ENCODE measurements at regions of chr6 and their contacts with region 1.

Region 1: DNA sequence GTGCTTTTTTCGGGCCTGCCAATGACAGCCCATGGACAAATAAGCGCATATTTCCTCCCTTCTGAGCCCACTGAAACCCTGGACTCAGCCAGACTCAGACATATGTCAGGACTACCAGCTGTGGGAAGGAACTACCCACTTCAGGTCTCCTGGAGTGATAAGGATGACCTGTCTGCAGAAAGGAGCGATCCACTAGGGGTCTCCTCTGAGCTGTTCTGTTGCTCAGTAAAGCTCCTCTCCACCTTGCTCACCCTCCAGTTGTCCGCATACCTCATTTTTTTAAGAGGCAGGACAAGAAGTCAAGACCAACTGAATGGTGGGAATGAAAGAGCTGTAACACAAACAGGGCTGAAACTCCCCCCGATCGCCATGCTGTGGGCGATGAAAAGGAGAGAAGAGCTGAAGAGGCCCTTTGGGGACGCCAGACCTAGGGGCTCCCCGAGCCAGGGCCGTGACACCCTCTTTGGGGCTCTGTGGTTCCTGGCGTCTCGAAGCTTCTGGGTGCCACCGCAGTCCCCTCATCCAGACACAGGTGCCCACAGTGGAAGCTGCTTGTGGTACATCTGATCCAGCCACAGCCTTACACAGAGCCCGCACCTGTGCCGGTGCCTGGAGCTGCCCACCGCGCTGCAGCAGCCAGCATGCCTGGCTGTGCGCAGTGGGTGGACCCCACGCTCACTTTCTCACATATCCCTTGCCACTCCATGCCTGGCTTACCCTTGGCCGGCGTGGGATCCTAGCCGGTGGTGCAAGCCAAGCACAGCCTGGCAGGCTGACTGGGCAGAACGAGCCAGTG is 68.8 kb downstream of the EYS start:
- DNase-seq: peak; percentile 45
- ATAC-seq: peak; percentile 100
- H3K4me3 ChIP-seq: no peak overlapping the region
- H3K27ac ChIP-seq: no peak overlapping the region
- H3K4me1 ChIP-seq: no peaks in the 10 kb centered on the region
- H3K27me3 ChIP-seq: no peaks in the 10 kb centered on the region
- CTCF ChIP-seq: peak; percentile 74
- EP300 ChIP-seq: no peak
- POLR2A ChIP-seq: no peak
- RAD21 ChIP-seq: no peak

Region 2: GRCh38 chr6:65776313-65776712 is 138.1 kb after region 1 on chr6:
- CTCF ChIA-PET with region 1: no interaction called
- POLR2A ChIA-PET with region 1: no interaction called
- in situ Hi-C with region 1: no loop called
- intact Hi-C with region 1: loop called (anchors 1 kb)
- DNase-seq: no peak
- ATAC-seq: peak; percentile 30; the same call in 1 of the 3 replicates
- H3K4me3 ChIP-seq: no peak overlapping the region
- H3K27ac ChIP-seq: no peak overlapping the region
- H3K4me1 ChIP-seq: no peaks in the 10 kb centered on the region
- H3K27me3 ChIP-seq: no peaks in the 10 kb centered on the region
- CTCF ChIP-seq: 0 out of 2 replicates have a peak, but pooled peaks have one; percentile 23
- EP300 ChIP-seq: no peak
- POLR2A ChIP-seq: no peak
- RAD21 ChIP-seq: no peak

Region 3: GRCh38 chr6:65943051-65943450 is 304.8 kb after region 1 on chr6:
- CTCF ChIA-PET with region 1: no interaction called
- POLR2A ChIA-PET with region 1: no interaction called
- in situ Hi-C with region 1: no loop called
- intact Hi-C with region 1: no loop called
- DNase-seq: no peak
- ATAC-seq: no peak
- H3K4me3 ChIP-seq: no peak overlapping the region
- H3K27ac ChIP-seq: no peak overlapping the region
- H3K4me1 ChIP-seq: no peaks in the 10 kb centered on the region
- H3K27me3 ChIP-seq: no peaks in the 10 kb centered on the region
- CTCF ChIP-seq: no peak
- EP300 ChIP-seq: no peak
- POLR2A ChIP-seq: no peak
- RAD21 ChIP-seq: no peak

Region 4: DNA sequence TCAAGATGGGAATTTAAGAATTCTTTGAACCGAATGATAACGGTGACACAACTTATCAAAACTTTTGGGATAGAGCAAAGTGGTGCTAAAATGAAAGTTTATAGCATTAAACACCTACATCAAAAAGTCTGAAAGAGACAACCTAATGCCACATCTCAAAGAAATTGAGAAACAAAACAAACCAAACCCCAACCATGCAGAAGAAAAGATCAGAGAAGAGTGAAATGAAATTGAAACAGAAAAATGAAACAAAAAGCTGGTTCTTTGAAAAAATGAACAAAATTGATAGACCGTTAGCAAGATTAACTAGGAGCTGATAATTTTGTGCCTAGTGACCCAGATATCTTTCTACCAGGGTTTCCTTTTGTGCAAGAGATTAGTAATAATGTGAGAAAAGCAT is 316.8 kb after region 1 on chr6:
- CTCF ChIA-PET with region 1: no interaction called
- POLR2A ChIA-PET with region 1: no interaction called
- in situ Hi-C with region 1: no loop called
- intact Hi-C with region 1: no loop called
- DNase-seq: no peak
- ATAC-seq: no peak
- H3K4me3 ChIP-seq: no peak overlapping the region
- H3K27ac ChIP-seq: no peak overlapping the region
- H3K4me1 ChIP-seq: no peaks in the 10 kb centered on the region
- H3K27me3 ChIP-seq: no peaks in the 10 kb centered on the region
- CTCF ChIP-seq: no peak
- EP300 ChIP-seq: no peak
- POLR2A ChIP-seq: no peak
- RAD21 ChIP-seq: no peak

Region 5: GRCh38 chr6:66264376-66264775 is 626.1 kb after region 1 on chr6:
- CTCF ChIA-PET with region 1: no interaction called
- POLR2A ChIA-PET with region 1: no interaction called
- in situ Hi-C with region 1: loop called (anchors 25 kb)
- intact Hi-C with region 1: no loop called
- DNase-seq: no peak
- ATAC-seq: no peak
- H3K4me3 ChIP-seq: no peak overlapping the region
- H3K27ac ChIP-seq: no peak overlapping the region
- H3K4me1 ChIP-seq: no peaks in the 10 kb centered on the region
- H3K27me3 ChIP-seq: no peaks in the 10 kb centered on the region
- CTCF ChIP-seq: no peak
- EP300 ChIP-seq: no peak
- POLR2A ChIP-seq: no peak
- RAD21 ChIP-seq: no peak

Region 6: DNA sequence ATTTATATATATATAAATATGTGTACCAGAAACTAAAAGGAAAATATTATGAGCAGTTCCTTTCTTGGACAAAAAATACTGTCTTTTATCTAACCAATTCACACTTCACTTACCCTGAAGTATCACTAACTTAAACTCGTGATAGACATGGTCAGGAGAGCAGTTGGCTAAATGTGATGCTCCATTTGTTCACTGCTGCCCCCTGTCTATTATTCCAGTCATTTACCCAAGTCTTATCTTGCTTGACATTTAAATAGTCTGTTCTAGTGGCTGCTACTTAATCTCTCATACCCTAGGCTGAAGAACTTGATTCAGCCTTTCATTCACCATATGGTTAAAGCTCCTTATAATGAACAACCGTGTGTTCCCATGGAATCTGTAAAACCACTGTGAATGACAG is 858.4 kb after region 1 on chr6:
- CTCF ChIA-PET with region 1: no interaction called
- POLR2A ChIA-PET with region 1: no interaction called
- in situ Hi-C with region 1: loop called (anchors 25 kb)
- intact Hi-C with region 1: no loop called
- DNase-seq: peak; percentile 50
- ATAC-seq: peak; percentile 95
- H3K4me3 ChIP-seq: no peak overlapping the region
- H3K27ac ChIP-seq: no peak overlapping the region
- H3K4me1 ChIP-seq: no peaks in the 10 kb centered on the region
- H3K27me3 ChIP-seq: no peaks in the 10 kb centered on the region; a peak in 1 of 5 replicates
- CTCF ChIP-seq: peak; percentile 75
- EP300 ChIP-seq: no peak
- POLR2A ChIP-seq: no peak
- RAD21 ChIP-seq: peak; percentile 52

Measured in HepG2 (cell line).